Heart left ventricle (tissue), 16 donors: ENCODE measurements at regions of chr20 and their contacts with region 1.

Region 1: DNA sequence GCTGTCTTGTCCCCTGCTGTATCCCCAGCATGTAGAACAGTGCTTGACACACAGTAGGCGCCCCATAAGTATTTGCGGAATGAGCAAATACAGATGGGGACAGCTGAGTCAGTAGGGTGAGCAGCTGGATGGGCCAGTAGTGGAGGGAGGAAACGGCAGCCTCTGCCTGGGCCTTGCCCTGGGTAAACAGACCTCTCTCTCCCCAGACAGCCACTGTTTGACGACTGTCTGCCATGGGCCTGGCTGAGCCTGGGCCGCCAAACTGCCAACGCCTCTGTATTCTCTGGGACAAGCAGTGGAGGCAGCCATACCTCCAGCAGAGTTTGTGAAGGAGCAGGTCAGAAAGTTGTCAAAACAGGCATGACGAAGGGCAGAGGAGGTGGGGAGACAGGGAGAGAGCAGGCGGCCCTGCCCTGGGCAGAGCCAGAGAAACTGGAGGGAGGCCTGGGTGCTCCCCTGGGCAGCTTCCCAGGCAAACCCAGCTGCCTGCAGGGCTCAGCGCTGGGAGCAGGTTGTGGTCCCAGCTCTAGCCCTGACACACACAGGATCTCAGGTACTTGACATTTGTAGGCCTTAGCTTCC is 15.2 kb downstream of the HNF4A start:
- DNase-seq: no peak
- ATAC-seq: no peak
- H3K4me3 ChIP-seq: no peak overlapping the region
- H3K27ac ChIP-seq: no peak overlapping the region
- H3K4me1 ChIP-seq: no peaks in the 10 kb centered on the region
- H3K27me3 ChIP-seq: no peaks in the 10 kb centered on the region
- CTCF ChIP-seq: no peak
- POLR2A ChIP-seq: no peak

Region 2: DNA sequence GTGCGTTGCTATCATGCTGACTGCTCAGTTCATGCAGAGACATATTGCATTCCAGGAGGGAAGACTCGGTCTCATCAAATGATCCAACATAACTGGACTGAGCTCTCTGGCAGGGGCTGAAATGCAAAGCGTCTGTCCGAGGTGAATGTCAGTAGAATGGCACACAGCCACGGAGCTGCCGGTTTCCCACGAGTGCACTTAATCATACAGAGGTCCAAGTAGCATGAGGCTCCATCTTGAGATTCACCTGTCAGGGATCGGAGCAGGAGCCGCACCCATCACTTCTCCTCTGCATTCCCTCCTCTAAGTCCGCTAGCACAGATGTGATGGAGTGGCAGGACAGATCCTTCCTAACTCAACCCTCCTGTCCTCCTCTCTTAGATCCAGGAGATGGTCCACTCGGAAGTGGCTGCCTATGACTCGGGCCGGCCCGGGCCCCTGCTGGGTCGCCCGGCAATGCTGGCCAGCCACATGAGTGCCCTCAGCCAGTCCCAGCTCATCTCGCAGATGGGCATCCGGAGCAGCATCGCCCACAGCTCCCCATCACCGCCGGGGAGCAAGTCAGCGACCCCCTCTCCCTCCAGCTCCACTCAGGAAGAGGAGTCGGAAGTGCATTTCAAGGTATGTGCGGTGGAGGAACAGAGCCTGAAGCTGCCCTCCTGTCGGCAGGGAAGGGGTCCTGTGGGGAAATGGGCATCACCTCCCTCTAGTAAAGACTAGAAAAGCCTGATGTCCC is 319.6 kb before region 1 on chr20:
- intact Hi-C with region 1: no loop called
- DNase-seq: peak in 1 of 5 donors; percentile 10
- ATAC-seq: no peak
- H3K4me3 ChIP-seq: no peak overlapping the region
- H3K27ac ChIP-seq: no peak overlapping the region
- H3K4me1 ChIP-seq: no peaks in the 10 kb centered on the region
- H3K27me3 ChIP-seq: no peaks in the 10 kb centered on the region
- CTCF ChIP-seq: no peak
- POLR2A ChIP-seq: no peak

Region 3: GRCh38 chr20:44324343-44324742 is 46.4 kb before region 1 on chr20:
- intact Hi-C with region 1: loop called in 1 of 10 experiments (anchors 5 kb)
- DNase-seq: no peak
- ATAC-seq: peak in 1 of 4 donors; percentile 48
- H3K4me3 ChIP-seq: no peak overlapping the region
- H3K27ac ChIP-seq: no peak overlapping the region
- H3K4me1 ChIP-seq: peaks cover 0 to 7% (median 0%) of the 10 kb centered on the region in 12 donors
- H3K27me3 ChIP-seq: peaks cover 0 to 16% (median 0%) of the 10 kb centered on the region in 9 donors
- CTCF ChIP-seq: no peak
- POLR2A ChIP-seq: no peak

Region 4: GRCh38 chr20:44407402-44408184 is 36.9 kb after region 1 on chr20:
- intact Hi-C with region 1: no loop called
- DNase-seq: peak in 1 of 5 donors; percentile 32
- ATAC-seq: peak in 1 of 4 donors; percentile 28
- H3K4me3 ChIP-seq: no peak overlapping the region
- H3K27ac ChIP-seq: no peak overlapping the region
- H3K4me1 ChIP-seq: no peaks in the 10 kb centered on the region
- H3K27me3 ChIP-seq: peaks cover 0 to 20% (median 4%) of the 10 kb centered on the region in 9 donors
- CTCF ChIP-seq: no peak
- POLR2A ChIP-seq: no peak